ENCODE measurements at regions of chr6 and their contacts with region 1.

Region 1: DNA sequence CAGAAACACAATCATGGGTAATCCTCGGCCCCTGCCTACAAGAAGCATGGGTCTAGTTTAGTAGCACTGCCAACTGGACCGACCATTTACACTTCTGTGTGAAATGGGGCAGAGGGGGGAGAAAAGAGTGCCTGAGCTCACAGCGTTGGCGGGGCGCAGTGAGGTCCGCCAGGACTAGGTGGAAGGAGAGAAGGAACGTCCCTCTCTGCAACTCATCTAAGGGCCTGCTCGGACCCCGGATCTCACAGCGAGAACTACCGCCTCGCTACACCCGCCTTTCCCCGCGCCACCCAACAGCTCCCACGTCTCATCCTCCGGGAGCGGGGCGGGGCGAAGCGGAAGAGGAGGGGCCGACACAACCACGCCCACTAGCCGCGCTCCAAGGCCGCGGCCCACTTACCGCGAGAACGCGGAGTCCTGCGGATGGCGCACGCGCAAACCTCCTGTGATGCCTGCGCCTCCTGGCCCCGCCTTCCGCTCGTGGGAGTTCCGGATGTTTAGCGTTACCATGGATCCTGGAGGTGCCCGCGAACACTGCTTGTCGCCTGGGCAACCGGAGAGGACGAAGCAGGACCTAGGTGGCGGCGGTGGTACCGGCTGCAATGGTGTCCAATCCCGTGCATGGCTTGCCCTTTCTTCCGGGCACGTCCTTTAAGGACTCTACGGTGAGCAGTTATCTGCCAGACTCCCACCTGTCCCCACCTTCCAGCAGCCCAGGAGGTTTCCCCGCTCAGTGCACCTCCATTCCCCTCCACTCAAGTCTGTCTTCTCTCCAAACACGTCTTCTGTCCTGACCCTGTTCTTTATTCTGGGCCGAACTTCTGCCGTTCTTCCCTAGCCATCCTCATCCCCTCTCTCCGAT is at the start of gene EFHC1:
- DNase-seq: peak in 1 of 2 donors; percentile 97
- H3K4me3 ChIP-seq: peak within 1 kb of the TSS; percentile 81 to 84
- H3K27ac ChIP-seq: peak within 1 kb of the TSS; percentile 86
- H3K4me1 ChIP-seq: peaks cover 29% of the 10 kb centered on the region
- H3K27me3 ChIP-seq: no peaks in the 10 kb centered on the region
- CTCF ChIP-seq: no peak
- POLR2A ChIP-seq: peak in 1 of 2 donors; percentile 74
- total RNA-seq, gene EFHC1: 27.0 TPM

Region 2: DNA sequence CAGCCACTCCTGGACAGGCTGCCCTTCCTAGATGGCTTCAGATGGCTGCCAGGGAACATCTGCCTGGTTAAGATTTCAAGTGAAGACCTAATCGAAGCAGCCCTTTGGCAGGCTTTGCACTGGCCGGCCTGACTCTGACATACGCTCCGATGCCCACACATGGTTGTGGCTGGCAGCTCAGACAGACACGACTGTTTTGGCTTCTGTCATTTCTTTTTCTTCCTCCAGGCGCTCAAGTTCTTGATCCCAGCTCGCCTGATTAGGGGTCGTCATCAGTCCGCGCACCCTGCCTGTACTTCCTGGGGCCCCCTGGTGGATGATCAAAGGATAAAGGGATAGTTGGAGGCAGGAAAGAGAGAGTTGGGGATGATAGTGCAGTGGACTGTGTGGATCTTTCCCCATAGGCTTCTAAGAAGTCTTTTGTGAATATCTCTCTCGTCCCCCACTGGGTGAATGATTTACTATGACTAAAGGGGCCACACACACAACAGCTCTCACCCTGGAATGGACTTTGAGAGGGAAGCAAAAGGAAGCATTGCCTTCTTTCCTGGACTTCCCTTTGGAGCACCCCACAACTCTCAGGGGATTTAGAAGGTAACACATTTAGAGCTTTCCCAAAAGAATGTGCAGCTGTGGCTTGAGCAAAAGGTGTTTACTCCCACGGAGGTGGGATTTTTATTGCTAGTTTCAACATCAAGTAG is 178.2 kb after region 1 on chr6:
- intact Hi-C with region 1: loop called (anchors 5 kb)
- DNase-seq: peak in 1 of 2 donors; percentile 46
- H3K4me3 ChIP-seq: no peak overlapping the region
- H3K27ac ChIP-seq: peak overlapping the region; percentile 12
- H3K4me1 ChIP-seq: peaks cover 31% of the 10 kb centered on the region
- H3K27me3 ChIP-seq: no peaks in the 10 kb centered on the region
- CTCF ChIP-seq: peak; percentile 33 to 59 (median 58)
- POLR2A ChIP-seq: no peak

Region 3: GRCh38 chr6:52663120-52663935 is 243.3 kb after region 1 on chr6:
- intact Hi-C with region 1: loop called (anchors 1 kb)
- DNase-seq: no peak
- H3K4me3 ChIP-seq: peak overlapping the region; percentile 68 to 69
- H3K27ac ChIP-seq: peak overlapping the region; percentile 22
- H3K4me1 ChIP-seq: peaks cover 15% of the 10 kb centered on the region
- H3K27me3 ChIP-seq: no peaks in the 10 kb centered on the region
- CTCF ChIP-seq: peak; percentile 70 to 88 (median 72)
- POLR2A ChIP-seq: no peak

Measured in vagina (tissue), 2 donors.